ENCODE measurements at regions of chr3 and their contacts with region 1.

Region 1: GRCh38 chr3:122679085-122679881 is 1.4 kb upstream of the PARP14 start:
- DNase-seq: peak; percentile 92
- ATAC-seq: peak; percentile 69
- H3K4me3 Mint-ChIP-seq: peak overlapping the region; percentile 96
- H3K27ac Mint-ChIP-seq: peak overlapping the region; percentile 90
- H3K4me1 Mint-ChIP-seq: peaks cover 48% of the 10 kb centered on the region
- H3K27me3 Mint-ChIP-seq: no peaks in the 10 kb centered on the region

Region 2: DNA sequence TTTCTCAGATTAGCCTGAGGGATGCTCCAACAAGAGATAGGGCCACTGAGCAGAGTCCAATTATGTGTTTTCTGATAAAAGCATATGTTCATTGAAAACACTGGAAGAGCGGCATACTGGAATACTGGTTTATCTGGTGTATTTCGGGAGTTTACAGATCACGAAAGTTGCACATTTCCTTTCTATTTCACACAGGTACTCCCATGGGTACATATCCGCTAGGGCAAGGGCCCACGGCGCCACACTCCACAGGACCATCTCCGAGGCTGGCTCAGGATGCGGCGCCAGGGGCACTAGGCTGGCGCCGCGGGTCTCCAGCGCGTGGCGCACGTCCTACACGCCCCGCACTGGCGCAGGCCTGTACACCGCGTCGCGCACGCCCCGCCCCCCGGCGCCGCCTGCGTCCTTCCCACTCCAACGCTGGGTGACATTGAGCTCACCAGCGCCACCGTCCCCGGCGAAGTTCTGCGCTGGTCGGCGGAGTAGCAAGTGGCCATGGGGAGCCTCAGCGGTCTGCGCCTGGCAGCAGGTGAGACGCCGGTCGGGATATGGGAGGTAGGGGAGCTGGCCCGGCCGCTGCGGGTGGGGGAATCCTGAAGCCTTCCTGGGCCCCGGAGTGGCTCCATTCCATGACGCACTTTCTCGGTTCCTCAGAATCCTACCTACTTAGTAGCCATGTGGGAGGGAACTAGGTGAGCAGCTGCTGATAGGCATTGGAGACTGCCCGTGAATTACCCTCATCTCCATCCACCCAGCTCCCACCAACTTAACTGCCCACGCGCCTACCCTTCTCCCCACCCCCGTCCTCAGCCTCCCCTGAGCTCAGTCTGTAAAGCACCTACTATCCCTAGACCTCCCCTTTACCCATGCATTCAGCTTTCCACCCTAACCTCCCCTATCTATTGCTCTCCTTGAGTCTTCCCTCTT is 295.2 kb before region 1 on chr3 and contains the start of gene FAM162A:
- CTCF ChIA-PET with region 1: interaction called, 13 read pairs
- DNase-seq: peak; percentile 95
- ATAC-seq: peak; percentile 97
- H3K4me3 Mint-ChIP-seq: peak within 1 kb of the TSS; percentile 91
- H3K27ac Mint-ChIP-seq: peak within 1 kb of the TSS; percentile 92
- H3K4me1 Mint-ChIP-seq: peaks cover 58% of the 10 kb centered on the region
- H3K27me3 Mint-ChIP-seq: no peaks in the 10 kb centered on the region
- total RNA-seq, gene FAM162A: 51.3 to 63.9 TPM

Region 3: DNA sequence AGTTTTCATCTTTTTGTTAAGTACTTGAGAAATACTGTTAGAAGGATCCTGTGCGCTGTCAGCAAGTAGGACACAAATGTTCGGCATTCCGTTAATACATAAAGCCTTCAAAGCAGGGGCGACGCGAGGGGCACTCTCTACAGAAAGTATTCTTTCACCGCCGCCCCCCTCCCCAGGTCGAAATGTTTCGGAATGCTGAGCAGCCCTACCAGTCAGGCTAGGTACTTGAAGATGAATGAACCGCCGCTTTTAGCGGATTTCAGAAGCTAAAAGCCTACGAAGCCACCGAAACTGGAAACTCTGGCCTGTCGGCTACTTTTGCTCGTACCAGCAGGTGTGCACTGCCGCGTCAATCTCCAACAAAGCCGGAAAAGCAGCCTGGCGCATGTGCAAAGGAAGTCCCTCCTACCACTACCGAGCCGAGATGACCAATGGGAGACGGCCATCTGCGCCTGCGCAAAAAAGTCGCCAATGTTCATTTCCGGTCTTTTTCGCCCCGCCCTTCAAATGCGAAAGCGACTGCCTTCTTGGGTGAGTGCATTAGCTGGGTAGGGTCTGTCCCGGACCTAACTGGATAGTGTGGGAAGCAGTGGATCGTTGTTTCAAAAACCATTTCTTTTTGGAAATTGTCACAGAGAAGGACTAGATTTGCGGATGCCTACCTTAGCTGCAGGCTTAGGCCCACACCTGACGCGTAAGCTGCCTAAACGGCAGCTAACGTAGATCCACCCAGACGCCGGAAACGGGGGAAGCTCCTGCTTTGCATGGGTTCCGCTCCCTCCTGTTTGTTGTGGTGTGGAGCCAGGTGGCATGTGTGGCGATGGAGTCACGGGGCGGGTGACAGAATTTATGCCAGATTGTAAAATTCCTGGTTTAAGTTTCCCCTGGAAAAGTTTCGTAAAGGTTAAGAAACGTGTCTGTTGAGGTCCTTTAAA is 263.3 kb before region 1 on chr3 and contains the start of gene WDR5B:
- CTCF ChIA-PET with region 1: interaction called, 26 read pairs
- DNase-seq: peak; percentile 99
- ATAC-seq: peak; percentile 93
- H3K4me3 Mint-ChIP-seq: peak within 1 kb of the TSS; percentile 95
- H3K27ac Mint-ChIP-seq: peak within 1 kb of the TSS; percentile 95
- H3K4me1 Mint-ChIP-seq: peaks cover 49% of the 10 kb centered on the region
- H3K27me3 Mint-ChIP-seq: no peaks in the 10 kb centered on the region
- total RNA-seq, gene WDR5B: 4.6 to 4.8 TPM

Region 4: DNA sequence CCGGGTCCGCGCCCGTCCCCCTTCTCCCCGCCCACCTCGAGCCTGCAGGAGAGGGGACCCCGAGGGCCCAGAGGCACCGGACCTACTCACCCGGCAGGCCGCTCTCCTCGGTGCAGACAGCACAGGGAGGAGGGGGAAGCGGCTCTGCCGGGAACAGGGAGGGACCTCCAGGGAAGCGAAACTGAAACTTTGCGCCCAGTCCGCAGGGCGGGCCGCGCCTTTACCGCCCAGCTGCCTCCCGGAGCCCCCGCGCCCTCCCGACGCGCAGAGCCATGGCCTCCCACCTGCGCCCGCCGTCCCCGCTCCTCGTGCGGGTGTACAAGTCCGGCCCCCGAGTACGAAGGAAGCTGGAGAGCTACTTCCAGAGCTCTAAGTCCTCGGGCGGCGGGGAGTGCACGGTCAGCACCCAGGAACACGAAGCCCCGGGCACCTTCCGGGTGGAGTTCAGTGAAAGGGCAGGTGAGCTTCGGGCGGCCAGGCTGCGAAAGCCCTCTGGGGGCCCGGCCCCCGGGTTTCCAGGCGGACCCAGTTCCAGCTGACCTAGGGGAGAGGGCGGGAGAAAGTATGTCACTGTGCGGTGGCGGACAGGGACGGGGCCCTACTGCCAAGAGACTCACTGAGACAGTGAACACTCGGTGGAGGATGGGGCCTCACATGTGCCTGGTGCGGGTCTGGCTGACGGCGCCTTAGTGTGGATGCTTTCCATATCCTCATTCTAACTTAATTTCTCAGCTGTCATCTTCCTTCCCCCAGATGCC is 114.9 kb before region 1 on chr3 and contains the starts of genes DTX3L and PARP9:
- CTCF ChIA-PET with region 1: interaction called, 145 read pairs
- DNase-seq: peak; percentile 94
- ATAC-seq: peak; percentile 97
- H3K4me3 Mint-ChIP-seq: peak within 1 kb of the TSS; percentile 99
- H3K27ac Mint-ChIP-seq: peak within 1 kb of the TSS; percentile 100
- H3K4me1 Mint-ChIP-seq: peaks cover 71% of the 10 kb centered on the region
- H3K27me3 Mint-ChIP-seq: no peaks in the 10 kb centered on the region
- total RNA-seq, gene DTX3L: 108 to 138 TPM
- total RNA-seq, gene PARP9: 91.8 to 147 TPM

Region 5: GRCh38 chr3:122668930-122669730 is 10.2 kb before region 1 on chr3:
- CTCF ChIA-PET with region 1: interaction called, 18 read pairs
- DNase-seq: peak; percentile 55
- ATAC-seq: peak; percentile 96
- H3K4me3 Mint-ChIP-seq: no peak overlapping the region
- H3K27ac Mint-ChIP-seq: no peak overlapping the region
- H3K4me1 Mint-ChIP-seq: peaks cover 15% of the 10 kb centered on the region
- H3K27me3 Mint-ChIP-seq: peaks cover 3% of the 10 kb centered on the region

Region 6: GRCh38 chr3:122824465-122825381 is 145.4 kb after region 1 on chr3:
- CTCF ChIA-PET with region 1: no interaction called
- DNase-seq: no peak
- ATAC-seq: no peak
- H3K4me3 Mint-ChIP-seq: no peak overlapping the region
- H3K27ac Mint-ChIP-seq: no peak overlapping the region
- H3K4me1 Mint-ChIP-seq: no peaks in the 10 kb centered on the region
- H3K27me3 Mint-ChIP-seq: no peaks in the 10 kb centered on the region

Measured in activated CD8-positive, alpha-beta memory T cell treated with anti-CD3 and anti-CD28 coated beads, Interleukin-2, amount 10 ng/mL, durations not matched to agents 7 days and 5 days (primary cell).